Activated B cell treated with CpG ODN at 0.5 μM for 24 hours (primary cell): ENCODE measurements at regions of chr6 and their contacts with region 1.

Region 1: DNA sequence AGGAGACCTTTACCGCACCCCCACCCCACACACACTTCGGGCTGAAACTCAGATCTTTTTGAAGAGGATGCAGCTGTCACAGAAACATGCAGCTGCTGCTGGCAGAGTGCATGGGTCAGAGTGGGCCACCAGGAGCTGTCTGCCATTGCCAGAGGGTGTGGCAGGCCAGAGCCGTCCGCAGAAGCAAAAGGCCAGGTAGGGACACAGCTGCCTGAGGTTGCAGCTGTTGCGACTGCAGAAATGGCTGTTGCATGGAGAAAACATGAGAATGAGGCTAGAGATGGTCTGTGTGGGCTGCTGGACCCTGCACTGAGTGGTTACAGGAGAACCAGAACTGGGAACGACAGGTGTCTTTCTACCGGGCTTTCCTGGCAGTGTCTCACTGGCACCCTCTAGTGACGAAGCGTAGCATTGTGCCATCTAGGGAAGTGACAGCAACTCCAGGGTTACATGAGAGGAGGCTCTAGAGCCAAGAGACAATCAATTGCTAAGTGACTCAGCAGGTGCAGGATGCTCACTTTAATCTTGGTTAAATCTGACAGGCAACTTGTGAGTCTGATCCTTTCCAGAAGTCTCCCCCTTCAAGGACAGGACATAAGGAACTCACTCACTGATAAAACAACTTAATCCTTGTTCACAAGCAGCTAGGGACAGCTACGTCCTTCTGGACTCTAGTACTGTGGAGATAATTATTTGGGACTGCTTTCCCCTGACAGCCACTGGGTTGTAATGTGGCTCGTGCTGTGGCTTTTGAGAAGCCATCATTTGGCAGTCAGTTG is 29.1 kb upstream of the SERPINB9 start:
- DNase-seq: peak; percentile 72
- ATAC-seq: peak; percentile 97
- H3K4me3 Mint-ChIP-seq: peak overlapping the region; percentile 73
- H3K27ac Mint-ChIP-seq: no peak overlapping the region
- H3K4me1 Mint-ChIP-seq: peaks cover 18% of the 10 kb centered on the region
- H3K27me3 Mint-ChIP-seq: no peaks in the 10 kb centered on the region
- CTCF ChIP-seq: peak; percentile 64

Region 2: DNA sequence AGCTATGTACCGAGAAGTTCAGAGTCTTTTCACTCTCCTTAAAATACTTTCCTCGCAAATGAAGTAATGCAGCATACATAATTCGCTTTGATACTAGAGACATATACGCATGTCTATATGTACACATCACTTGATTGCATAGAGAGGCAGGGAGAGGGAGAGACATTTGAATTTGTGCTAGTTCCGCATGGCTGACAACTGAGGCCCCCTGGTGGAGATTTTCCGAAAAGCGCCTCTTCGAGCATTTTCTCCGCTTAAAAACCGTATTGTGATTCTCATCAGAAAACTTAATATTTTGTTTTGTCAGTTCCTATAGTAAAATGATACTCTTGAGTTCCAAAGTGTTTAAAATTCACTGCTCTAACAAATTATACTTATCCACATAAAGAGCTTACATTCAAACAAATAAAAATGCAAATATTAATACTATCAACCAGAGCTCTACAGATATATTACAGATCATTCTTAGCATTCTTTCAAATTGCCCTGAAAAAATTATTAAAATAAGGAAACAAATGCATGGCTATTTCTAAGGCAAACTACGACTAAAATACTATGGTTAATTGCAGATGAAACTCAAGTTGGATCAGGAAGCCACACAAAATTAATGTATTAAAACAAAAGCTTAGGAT is 182.1 kb before region 1 on chr6:
- CTCF ChIA-PET with region 1: no interaction called
- POLR2A ChIA-PET with region 1: no interaction called
- intact Hi-C with region 1: no loop called
- DNase-seq: peak; percentile 53
- ATAC-seq: peak; percentile 76
- H3K4me3 Mint-ChIP-seq: no peak overlapping the region
- H3K27ac Mint-ChIP-seq: no peak overlapping the region
- H3K4me1 Mint-ChIP-seq: peaks cover 13% of the 10 kb centered on the region
- H3K27me3 Mint-ChIP-seq: peaks cover 14% of the 10 kb centered on the region
- CTCF ChIP-seq: peak; percentile 79

Region 3: DNA sequence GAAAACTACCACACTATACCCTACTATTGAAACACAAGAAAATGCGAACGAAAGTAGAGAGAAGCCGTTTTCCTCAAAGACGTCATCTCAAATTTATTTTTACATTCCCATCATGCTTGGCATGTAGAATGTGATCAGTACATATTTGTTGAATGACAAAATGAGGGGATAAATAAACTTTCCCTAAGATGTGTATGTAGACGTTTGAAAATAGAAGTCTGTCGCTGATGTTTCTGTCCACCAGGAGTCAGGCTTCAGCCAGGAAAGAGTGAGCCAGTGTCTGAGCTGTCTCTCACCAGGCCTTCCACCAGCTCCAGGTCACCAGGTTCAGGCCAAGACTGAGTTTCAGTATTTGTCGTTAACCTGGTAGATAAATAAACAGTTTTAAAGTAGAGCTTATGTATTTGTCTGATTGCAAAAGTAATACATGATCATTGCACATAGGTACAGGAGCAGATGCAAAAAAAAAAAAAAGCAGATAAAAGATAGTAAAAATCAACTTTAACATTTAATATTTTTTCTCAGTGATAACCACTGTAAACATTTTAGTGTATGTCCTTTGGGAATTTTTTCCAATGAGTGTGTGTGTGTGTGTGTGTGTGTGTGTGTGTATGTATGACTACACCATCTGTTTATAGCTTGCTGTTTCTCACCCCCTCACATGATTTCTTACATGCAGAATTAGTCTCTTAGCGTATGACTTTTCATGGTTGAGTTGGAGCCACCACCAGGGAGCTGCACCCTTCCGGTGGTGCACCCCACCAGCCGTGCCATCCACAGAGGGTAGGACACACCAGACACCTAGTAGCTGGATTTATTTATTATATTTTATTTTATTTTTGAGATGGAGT is 140.8 kb before region 1 on chr6:
- CTCF ChIA-PET with region 1: interaction called, 61 read pairs
- POLR2A ChIA-PET with region 1: interaction called, 6 read pairs
- intact Hi-C with region 1: loop called (anchors 1 kb)
- DNase-seq: no peak
- ATAC-seq: peak; percentile 91
- H3K4me3 Mint-ChIP-seq: peak overlapping the region; percentile 72
- H3K27ac Mint-ChIP-seq: peak overlapping the region; percentile 67
- H3K4me1 Mint-ChIP-seq: peaks cover 41% of the 10 kb centered on the region
- H3K27me3 Mint-ChIP-seq: no peaks in the 10 kb centered on the region
- CTCF ChIP-seq: no peak

Region 4: GRCh38 chr6:2853761-2854395 is 78.3 kb before region 1 on chr6:
- CTCF ChIA-PET with region 1: interaction called, 177 read pairs
- POLR2A ChIA-PET with region 1: interaction called, 12 read pairs
- intact Hi-C with region 1: no loop called
- DNase-seq: no peak
- ATAC-seq: peak; percentile 42
- H3K4me3 Mint-ChIP-seq: peak overlapping the region; percentile 74
- H3K27ac Mint-ChIP-seq: peak overlapping the region; percentile 97
- H3K4me1 Mint-ChIP-seq: peaks cover 81% of the 10 kb centered on the region
- H3K27me3 Mint-ChIP-seq: no peaks in the 10 kb centered on the region
- CTCF ChIP-seq: no peak

Region 5: GRCh38 chr6:2911171-2911570 is 21.0 kb before region 1 on chr6:
- CTCF ChIA-PET with region 1: interaction called, 16 read pairs
- POLR2A ChIA-PET with region 1: interaction called, 6 read pairs
- intact Hi-C with region 1: loop called (anchors 1 kb)
- DNase-seq: no peak
- ATAC-seq: peak; percentile 80
- H3K4me3 Mint-ChIP-seq: peak overlapping the region; percentile 51
- H3K27ac Mint-ChIP-seq: peak overlapping the region; percentile 88
- H3K4me1 Mint-ChIP-seq: peaks cover 43% of the 10 kb centered on the region
- H3K27me3 Mint-ChIP-seq: no peaks in the 10 kb centered on the region
- CTCF ChIP-seq: no peak

Region 6: GRCh38 chr6:2971420-2972218 is 39.5 kb after region 1 on chr6 and contains the start of gene SERPINB6:
- CTCF ChIA-PET with region 1: no interaction called
- POLR2A ChIA-PET with region 1: interaction called, 3 read pairs
- intact Hi-C with region 1: loop called (anchors 2 kb)
- DNase-seq: peak; percentile 60
- ATAC-seq: peak; percentile 72
- H3K4me3 Mint-ChIP-seq: peak within 1 kb of the TSS; percentile 88
- H3K27ac Mint-ChIP-seq: peak within 1 kb of the TSS; percentile 85
- H3K4me1 Mint-ChIP-seq: peaks cover 40% of the 10 kb centered on the region
- H3K27me3 Mint-ChIP-seq: peaks cover 1% of the 10 kb centered on the region
- CTCF ChIP-seq: no peak
- total RNA-seq, gene SERPINB6: 51.7 and 56.1 TPM in 2 replicates

Region 7: DNA sequence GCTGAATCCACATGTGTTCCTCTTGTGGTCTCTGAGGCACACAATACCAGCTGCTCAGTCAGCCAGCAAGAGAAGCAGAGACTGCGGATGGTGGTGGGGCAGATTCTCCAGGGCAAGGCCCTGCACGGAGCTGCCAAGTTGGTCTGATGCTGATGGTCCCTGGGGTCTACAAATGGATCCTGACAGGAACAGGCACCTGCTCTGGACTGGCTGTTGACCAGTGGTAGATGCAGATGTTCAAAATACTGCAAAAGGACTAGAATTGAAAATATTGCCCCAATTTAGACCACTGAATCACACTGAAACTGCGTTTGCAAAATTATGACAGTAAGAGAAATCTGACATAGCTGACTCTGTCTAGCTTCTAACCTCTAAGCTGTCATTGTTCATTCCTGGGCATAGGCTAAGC is 254.8 kb after region 1 on chr6:
- CTCF ChIA-PET with region 1: no interaction called
- POLR2A ChIA-PET with region 1: no interaction called
- intact Hi-C with region 1: no loop called
- DNase-seq: no peak
- ATAC-seq: no peak
- H3K4me3 Mint-ChIP-seq: no peak overlapping the region
- H3K27ac Mint-ChIP-seq: no peak overlapping the region
- H3K4me1 Mint-ChIP-seq: no peaks in the 10 kb centered on the region
- H3K27me3 Mint-ChIP-seq: peaks cover 12% of the 10 kb centered on the region
- CTCF ChIP-seq: no peak